A673 (cell line): ENCODE measurements at regions of chr2 and their contacts with region 1.

Region 1: DNA sequence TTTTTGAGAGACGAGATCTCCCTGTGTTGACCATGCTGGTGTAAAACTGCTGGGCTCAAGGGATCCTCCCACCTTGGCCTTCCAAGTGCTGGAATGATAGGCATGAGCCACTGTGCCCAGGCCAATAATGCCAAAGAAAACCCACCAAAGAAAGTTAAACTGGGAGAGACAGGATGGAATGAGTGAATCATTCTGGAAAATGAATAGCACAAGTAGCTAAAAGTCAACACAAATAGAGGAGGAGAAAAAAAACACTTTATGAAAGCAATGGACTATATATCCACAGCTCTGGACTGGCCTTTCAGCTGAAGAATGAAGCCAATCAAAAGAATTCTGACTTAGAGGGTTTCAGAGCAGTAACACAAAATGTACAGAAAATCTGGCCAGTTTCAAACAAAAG is 23.9 kb downstream of the IAH1 start:
- DNase-seq: no peak
- H3K4me3 ChIP-seq: no peak overlapping the region
- H3K27ac ChIP-seq: no peak overlapping the region
- H3K4me1 ChIP-seq: no peaks in the 10 kb centered on the region
- H3K27me3 ChIP-seq: no peaks in the 10 kb centered on the region
- CTCF ChIP-seq: no peak

Region 2: DNA sequence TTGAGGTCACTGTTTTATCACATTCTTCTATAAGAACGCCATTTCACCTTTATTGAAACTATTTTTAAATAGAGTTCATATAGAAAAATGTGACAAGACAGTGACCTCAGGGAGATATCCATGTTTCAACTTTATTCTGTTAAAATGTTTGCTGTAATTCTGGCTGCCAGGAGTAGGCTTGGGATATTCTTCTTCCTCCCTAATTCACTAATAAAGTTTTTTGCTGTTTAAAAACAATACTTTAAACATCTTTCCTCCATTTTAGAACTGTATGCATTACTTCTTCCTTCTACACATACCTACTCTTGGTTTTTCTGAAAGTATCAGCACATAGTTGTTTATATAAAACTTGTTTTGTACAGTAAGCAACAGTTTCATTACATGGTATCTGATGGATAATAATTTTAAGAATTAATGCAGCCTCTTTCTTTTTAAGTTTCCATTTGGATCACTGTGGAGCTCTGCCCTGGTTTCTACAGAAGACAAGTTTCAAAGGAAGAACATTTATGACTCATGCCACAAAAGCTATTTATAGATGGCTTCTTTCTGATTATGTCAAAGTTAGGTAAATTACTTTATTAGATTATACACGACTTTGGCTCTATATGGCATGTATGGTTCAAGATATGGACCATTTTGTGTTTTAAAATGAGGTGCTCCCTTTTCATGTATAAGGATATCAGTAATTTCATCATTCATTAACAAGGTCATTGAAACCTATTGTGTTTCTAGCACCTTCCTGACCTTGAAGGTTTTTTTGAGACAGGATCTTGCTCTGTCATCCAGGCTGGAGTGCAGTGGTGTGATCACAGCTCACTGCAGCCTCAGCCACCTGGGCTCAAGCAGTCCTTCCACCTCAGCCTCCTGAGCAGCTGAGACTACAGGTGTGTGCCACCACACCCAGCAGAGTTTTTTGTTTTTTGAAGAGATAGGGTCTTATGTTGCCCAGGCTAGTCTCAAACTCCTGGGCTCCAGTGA is 67.6 kb before region 1 on chr2:
- CTCF ChIA-PET with region 1: no interaction called
- POLR2A ChIA-PET with region 1: interaction called, 12 read pairs
- intact Hi-C with region 1: no loop called
- DNase-seq: no peak
- H3K4me3 ChIP-seq: no peak overlapping the region
- H3K27ac ChIP-seq: no peak overlapping the region
- H3K4me1 ChIP-seq: no peaks in the 10 kb centered on the region
- H3K27me3 ChIP-seq: no peaks in the 10 kb centered on the region
- CTCF ChIP-seq: no peak